ENCODE measurements at regions of chr9 and their contacts with region 1.

Region 1: GRCh38 chr9:109182940-109183798 is 16.1 kb upstream of the FRRS1L start:
- DNase-seq: peak; percentile 64
- ATAC-seq: peak; percentile 77
- H3K4me3 Mint-ChIP-seq: no peak overlapping the region
- H3K27ac Mint-ChIP-seq: peak overlapping the region; percentile 4; the same call in 1 of the 2 replicates
- H3K4me1 Mint-ChIP-seq: peaks cover 3% of the 10 kb centered on the region; the same call in 1 of the 2 replicates
- H3K27me3 Mint-ChIP-seq: no peaks in the 10 kb centered on the region
- CTCF ChIP-seq: peak; percentile 35; the same call in 1 of the 2 replicates

Region 2: DNA sequence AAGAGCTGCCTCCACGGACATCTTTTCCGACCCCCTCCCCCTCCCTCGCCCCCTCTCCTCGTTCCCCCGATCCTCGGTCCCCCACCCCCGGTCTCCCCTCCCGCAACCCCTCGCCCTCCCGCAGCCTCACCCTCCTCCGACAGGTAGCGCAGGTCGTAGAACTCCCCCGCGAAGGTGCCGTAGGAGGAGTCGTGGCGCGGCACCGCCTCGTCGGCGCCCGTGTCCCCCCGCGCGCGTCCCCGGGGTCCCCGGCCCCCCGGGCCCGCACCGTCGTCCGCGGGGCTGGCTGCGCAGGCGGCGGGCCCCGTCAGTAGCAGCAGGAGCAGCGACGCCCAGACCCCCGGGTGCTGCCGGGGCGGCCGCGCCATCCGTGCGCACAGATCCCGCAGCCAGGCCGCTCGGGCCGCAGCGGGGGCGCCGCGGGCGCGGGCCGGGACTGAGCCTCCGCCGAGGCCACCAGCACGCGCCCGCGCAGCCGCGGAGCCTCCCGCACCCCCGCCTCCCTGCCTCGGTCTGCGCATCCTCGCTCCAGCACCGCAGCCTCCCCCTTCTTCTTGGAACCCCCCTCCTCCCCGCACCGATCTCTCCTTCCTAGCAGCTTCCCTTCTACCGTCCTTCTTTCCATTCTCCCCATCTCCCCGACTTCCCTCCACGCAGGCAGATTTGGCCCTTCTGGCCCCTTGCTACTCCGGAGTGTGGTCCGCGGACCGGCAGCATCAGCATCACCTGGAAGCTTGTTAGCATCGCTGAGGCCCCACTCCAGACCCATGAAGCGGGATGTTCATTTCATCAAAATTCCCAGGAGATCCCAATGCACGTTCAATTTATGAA is 16.2 kb before region 1 on chr9 and contains the start of gene FRRS1L:
- CTCF ChIA-PET with region 1: interaction called, 37 read pairs
- POLR2A ChIA-PET with region 1: interaction called, 9 read pairs
- DNase-seq: peak; percentile 60
- ATAC-seq: peak; percentile 75
- H3K4me3 Mint-ChIP-seq: peak within 1 kb of the TSS; percentile 82
- H3K27ac Mint-ChIP-seq: no peak within 1 kb of the TSS
- H3K4me1 Mint-ChIP-seq: peaks cover 9% of the 10 kb centered on the region
- H3K27me3 Mint-ChIP-seq: peaks cover 48% of the 10 kb centered on the region
- CTCF ChIP-seq: no peak
- total RNA-seq, gene FRRS1L: 0.71 to 1.1 TPM (median 1.0 TPM) in 3 replicates

Region 3: DNA sequence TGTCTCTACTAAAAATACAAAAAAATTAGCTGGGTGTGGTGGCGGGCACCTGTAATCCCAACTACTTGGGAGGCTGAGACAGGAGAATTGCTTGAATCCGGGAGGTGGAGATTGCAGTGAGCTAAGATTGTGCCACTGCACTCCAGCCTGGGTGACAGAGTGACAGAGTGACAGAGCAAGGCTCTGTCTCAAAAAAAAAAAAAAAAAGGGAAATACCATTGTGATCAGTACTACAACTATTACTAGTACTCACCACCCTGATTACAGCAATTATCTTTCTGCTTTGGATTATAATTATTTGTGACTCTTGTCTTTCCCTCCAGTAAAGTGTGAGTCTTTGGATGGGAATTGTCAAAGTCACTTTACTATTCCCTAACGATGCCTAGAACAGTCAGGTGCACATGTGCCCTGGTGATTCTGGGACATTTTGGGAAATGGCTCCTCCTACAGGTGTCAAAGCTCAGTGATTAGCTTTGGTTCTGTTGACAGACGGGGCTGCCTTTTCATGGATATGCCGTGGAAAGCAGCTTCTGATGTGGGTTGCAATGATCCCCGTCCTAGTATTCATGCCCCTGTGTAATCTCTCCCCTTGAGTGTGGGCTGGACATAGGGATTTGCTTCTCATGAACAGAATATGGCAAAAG is 15.7 kb after region 1 on chr9:
- CTCF ChIA-PET with region 1: interaction called, 27 read pairs
- POLR2A ChIA-PET with region 1: no interaction called
- DNase-seq: no peak
- ATAC-seq: peak; percentile 86
- H3K4me3 Mint-ChIP-seq: no peak overlapping the region
- H3K27ac Mint-ChIP-seq: no peak overlapping the region
- H3K4me1 Mint-ChIP-seq: no peaks in the 10 kb centered on the region
- H3K27me3 Mint-ChIP-seq: no peaks in the 10 kb centered on the region
- CTCF ChIP-seq: 0 out of 2 replicates have a peak, but pooled peaks have one; percentile 11

Region 4: DNA sequence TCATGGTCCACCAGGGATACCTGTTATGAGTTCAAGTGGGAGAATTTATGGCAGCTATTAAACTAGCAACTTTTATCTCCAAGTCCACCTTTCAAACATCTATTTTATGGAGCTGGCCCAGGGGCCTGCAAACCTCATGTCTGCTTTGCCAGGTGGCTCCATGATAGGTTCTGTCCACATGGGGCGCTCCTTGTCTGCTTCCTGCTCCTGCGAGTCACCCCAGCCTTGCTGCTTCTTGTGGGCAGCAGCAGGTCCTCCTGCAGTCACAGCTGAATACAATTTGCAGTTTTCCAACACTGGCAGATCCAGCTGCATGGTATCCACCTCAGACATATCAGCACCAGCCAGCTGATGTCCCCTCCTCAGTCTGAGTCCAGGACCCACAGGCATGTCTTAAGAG is 23.5 kb after region 1 on chr9:
- CTCF ChIA-PET with region 1: interaction called, 10 read pairs
- POLR2A ChIA-PET with region 1: no interaction called
- DNase-seq: peak; percentile 66
- ATAC-seq: peak; percentile 98
- H3K4me3 Mint-ChIP-seq: no peak overlapping the region
- H3K27ac Mint-ChIP-seq: no peak overlapping the region
- H3K4me1 Mint-ChIP-seq: no peaks in the 10 kb centered on the region
- H3K27me3 Mint-ChIP-seq: no peaks in the 10 kb centered on the region; the same call in 1 of the 2 replicates
- CTCF ChIP-seq: 0 out of 2 replicates have a peak, but pooled peaks have one; percentile 26

Region 5: GRCh38 chr9:109224751-109225150 is 41.6 kb after region 1 on chr9:
- CTCF ChIA-PET with region 1: no interaction called
- POLR2A ChIA-PET with region 1: no interaction called
- DNase-seq: no peak
- ATAC-seq: no peak
- H3K4me3 Mint-ChIP-seq: no peak overlapping the region
- H3K27ac Mint-ChIP-seq: no peak overlapping the region
- H3K4me1 Mint-ChIP-seq: no peaks in the 10 kb centered on the region
- H3K27me3 Mint-ChIP-seq: peaks cover 2% of the 10 kb centered on the region; the same call in 1 of the 2 replicates
- CTCF ChIP-seq: no peak

Region 6: GRCh38 chr9:109316207-109316640 is 133.1 kb after region 1 on chr9:
- CTCF ChIA-PET with region 1: interaction called, 19 read pairs
- POLR2A ChIA-PET with region 1: no interaction called
- DNase-seq: no peak
- ATAC-seq: peak; percentile 6
- H3K4me3 Mint-ChIP-seq: no peak overlapping the region
- H3K27ac Mint-ChIP-seq: peak overlapping the region; percentile 47
- H3K4me1 Mint-ChIP-seq: peaks cover 77% of the 10 kb centered on the region
- H3K27me3 Mint-ChIP-seq: peaks cover 3% of the 10 kb centered on the region
- CTCF ChIP-seq: no peak

Region 7: DNA sequence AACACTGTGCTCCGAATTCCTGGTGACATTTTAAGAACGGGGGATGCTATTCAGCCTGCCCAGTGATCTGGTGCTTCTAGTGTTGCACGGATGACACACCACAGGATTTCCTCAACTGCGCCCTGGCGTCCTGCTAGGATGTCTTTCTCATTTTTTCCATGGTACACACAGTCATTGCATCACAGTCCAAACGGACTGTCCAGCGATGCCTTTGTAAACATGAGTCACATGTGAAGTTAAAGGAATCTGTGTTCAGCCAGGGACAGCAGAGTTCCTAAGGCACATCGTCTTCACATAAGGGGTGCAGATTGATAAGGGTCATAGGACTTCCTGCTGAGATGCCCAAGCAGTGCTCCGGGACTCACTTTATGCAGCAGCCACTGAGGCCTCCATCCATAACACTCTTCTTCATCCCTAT is 324.3 kb after region 1 on chr9:
- CTCF ChIA-PET with region 1: no interaction called
- POLR2A ChIA-PET with region 1: no interaction called
- DNase-seq: no peak
- ATAC-seq: no peak
- H3K4me3 Mint-ChIP-seq: no peak overlapping the region
- H3K27ac Mint-ChIP-seq: no peak overlapping the region
- H3K4me1 Mint-ChIP-seq: peaks cover 4% of the 10 kb centered on the region
- H3K27me3 Mint-ChIP-seq: peaks cover 5% of the 10 kb centered on the region
- CTCF ChIP-seq: no peak

Measured in WTC11 (cell line).